Mammary epithelial cell (primary cell): ENCODE measurements at regions of chr12 and their contacts with region 1.

Region 1: GRCh38 chr12:50084775-50085614 is at the start of gene SMARCD1:
- DNase-seq: peak; percentile 86
- H3K4me3 ChIP-seq: peak within 1 kb of the TSS; percentile 47 to 77 (median 66)
- H3K27ac ChIP-seq: peak within 1 kb of the TSS; percentile 57
- H3K4me1 ChIP-seq: peaks cover 37% of the 10 kb centered on the region
- H3K27me3 ChIP-seq: no peaks in the 10 kb centered on the region
- CTCF ChIP-seq: peak; percentile 15 to 72
- total RNA-seq, gene SMARCD1: 106 to 107 TPM

Region 2: DNA sequence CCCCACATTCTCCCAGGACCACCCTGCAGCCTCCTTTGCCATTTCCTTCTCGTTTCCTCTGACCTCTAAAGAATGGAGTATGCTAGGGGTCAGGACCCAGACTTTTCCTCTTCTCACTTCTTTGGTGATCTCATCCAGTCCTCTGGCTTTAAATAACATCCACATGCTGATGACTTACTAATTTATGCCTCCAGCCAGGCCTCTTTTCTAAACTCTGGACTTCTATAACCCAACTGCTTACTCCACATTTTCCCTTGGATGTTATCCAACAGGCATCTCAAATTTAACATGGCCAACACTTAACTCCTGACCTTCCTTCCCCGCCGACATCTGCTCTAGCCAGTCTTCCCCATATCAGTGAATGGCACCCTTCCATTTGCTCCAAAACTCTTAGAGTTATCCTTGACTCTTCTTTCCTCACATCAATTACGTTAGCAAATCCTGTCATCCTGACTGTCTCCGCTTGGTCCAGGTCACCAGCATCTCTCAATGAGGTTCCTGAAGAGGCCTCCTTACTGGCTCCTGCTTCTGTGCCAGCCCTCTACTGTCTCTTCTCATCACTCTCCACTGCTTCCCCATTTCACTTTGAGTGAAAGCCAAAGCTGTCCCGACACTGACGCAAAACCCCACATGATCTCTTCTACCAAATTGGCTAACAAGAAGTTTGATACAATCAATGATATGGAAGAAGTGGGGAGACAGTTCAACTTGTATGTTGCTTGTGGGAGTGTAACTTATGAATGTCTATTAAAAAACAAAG is 300.9 kb before region 1 on chr12:
- CTCF ChIA-PET with region 1: no interaction called
- dilution Hi-C with region 1: no loop called
- in situ Hi-C with region 1: no loop called
- intact Hi-C with region 1: no loop called
- DNase-seq: no peak
- H3K4me3 ChIP-seq: no peak overlapping the region
- H3K27ac ChIP-seq: no peak overlapping the region
- H3K4me1 ChIP-seq: no peaks in the 10 kb centered on the region
- H3K27me3 ChIP-seq: no peaks in the 10 kb centered on the region
- CTCF ChIP-seq: no peak

Region 3: GRCh38 chr12:50111693-50112455 is 26.9 kb after region 1 on chr12 and contains the start of gene COX14:
- CTCF ChIA-PET with region 1: interaction called, 10 read pairs
- dilution Hi-C with region 1: no loop called
- in situ Hi-C with region 1: no loop called
- intact Hi-C with region 1: loop called (anchors 1 kb)
- DNase-seq: peak; percentile 100
- H3K4me3 ChIP-seq: peak within 1 kb of the TSS; percentile 64 to 100 (median 87)
- H3K27ac ChIP-seq: peak within 1 kb of the TSS; percentile 76
- H3K4me1 ChIP-seq: peaks cover 15% of the 10 kb centered on the region
- H3K27me3 ChIP-seq: no peaks in the 10 kb centered on the region
- CTCF ChIP-seq: peak; percentile 83 to 94
- total RNA-seq, gene COX14: 38.5 to 51.3 TPM

Region 4: DNA sequence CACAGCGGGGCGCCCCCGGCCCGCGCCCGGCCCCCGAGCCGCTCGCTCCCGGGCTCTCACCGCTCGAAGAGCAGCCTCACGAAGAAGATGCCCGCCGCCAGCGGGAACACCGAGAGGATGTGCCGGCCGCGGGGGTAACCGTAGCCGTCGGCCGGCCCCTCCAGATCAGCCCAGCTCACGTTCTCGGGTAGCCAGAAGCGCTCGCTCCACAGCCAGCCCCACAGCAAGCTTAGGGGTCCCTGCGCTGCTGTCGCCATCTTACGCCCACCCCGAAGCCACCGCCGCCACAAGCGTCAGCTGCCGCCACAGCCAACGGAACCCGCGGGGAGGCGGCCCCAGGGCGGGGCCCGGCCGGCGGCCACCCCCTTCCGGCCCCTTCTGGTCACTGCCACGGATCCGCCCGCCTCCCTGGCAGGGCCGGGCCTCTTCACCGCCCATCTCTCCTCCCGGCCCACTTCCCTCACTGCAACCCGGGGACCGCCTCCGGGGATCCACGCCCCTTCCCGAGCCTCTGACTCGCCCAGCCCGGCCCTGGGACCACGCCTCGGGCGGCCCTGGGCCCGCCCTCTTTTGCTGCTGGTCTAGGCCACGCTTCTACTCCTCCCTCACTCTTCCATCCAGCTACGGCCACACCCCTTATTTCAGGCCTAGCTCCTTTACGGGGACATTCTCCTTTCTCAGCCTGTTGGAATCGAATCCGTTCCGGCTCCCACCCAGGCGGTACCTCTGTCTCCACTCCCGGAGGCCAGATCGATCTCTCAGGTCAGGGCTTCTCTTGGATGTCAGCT is 82.2 kb after region 1 on chr12 and contains the start of gene CERS5:
- CTCF ChIA-PET with region 1: no interaction called
- dilution Hi-C with region 1: no loop called
- in situ Hi-C with region 1: loop called in 1 of 2 experiments (anchors 10 kb)
- intact Hi-C with region 1: loop called (anchors 2 kb)
- DNase-seq: peak; percentile 99
- H3K4me3 ChIP-seq: peak within 1 kb of the TSS; percentile 54 to 70 (median 62)
- H3K27ac ChIP-seq: peak within 1 kb of the TSS; percentile 76
- H3K4me1 ChIP-seq: peaks cover 7% of the 10 kb centered on the region
- H3K27me3 ChIP-seq: no peaks in the 10 kb centered on the region
- CTCF ChIP-seq: peak in 1 of 2 donors; percentile 13
- total RNA-seq, gene CERS5: 29.2 to 65.7 TPM

Region 5: GRCh38 chr12:50174971-50175715 is 90.1 kb after region 1 on chr12:
- CTCF ChIA-PET with region 1: no interaction called
- dilution Hi-C with region 1: no loop called
- in situ Hi-C with region 1: loop called in 1 of 2 experiments (anchors 10 kb)
- intact Hi-C with region 1: loop called (anchors 1 kb)
- DNase-seq: no peak
- H3K4me3 ChIP-seq: no peak overlapping the region
- H3K27ac ChIP-seq: no peak overlapping the region
- H3K4me1 ChIP-seq: no peaks in the 10 kb centered on the region
- H3K27me3 ChIP-seq: no peaks in the 10 kb centered on the region
- CTCF ChIP-seq: peak; percentile 52 to 56

Region 6: GRCh38 chr12:50271280-50272247 is 186.6 kb after region 1 on chr12:
- CTCF ChIA-PET with region 1: no interaction called
- dilution Hi-C with region 1: no loop called
- in situ Hi-C with region 1: no loop called
- intact Hi-C with region 1: no loop called
- DNase-seq: no peak
- H3K4me3 ChIP-seq: peak overlapping the region in 2 of 3 experiments; percentile 1 to 7
- H3K27ac ChIP-seq: no peak overlapping the region
- H3K4me1 ChIP-seq: peaks cover 4% of the 10 kb centered on the region
- H3K27me3 ChIP-seq: no peaks in the 10 kb centered on the region
- CTCF ChIP-seq: no peak

Region 7: DNA sequence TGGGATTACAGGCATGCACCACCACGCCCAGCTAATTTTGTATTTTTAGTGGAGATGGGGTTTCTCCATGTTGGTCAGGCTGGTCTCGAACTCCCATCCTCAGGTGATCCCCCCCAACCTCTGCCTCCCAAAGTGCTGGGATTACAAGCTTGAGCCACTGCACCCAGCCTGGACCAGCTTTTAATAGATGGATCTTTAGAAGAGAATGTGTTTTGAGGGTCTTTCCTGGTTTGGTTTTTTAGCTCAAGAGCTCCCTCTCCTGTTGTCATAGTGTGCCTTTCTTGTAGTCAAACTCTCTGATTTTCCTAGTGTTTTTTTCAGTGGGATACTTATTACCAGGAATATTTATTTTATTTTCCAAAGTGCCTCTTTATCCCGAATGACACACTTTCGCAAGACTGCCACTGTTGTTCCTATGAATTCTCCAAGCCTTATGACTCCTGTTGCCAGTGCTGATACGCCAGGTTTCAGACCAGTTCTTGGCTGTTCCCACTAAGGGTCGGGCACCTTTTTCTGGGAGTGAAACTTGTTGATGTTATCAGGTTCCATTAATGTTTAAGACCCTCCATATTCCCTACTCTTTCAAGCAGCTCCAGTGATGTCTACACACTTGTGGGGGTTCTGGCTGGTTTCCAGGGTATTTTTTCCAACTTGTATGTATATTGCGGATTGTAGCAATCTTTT is 229.8 kb after region 1 on chr12:
- CTCF ChIA-PET with region 1: no interaction called
- dilution Hi-C with region 1: no loop called
- in situ Hi-C with region 1: loop called in 1 of 2 experiments (anchors 25 kb)
- intact Hi-C with region 1: no loop called
- DNase-seq: no peak
- H3K4me3 ChIP-seq: no peak overlapping the region
- H3K27ac ChIP-seq: no peak overlapping the region
- H3K4me1 ChIP-seq: peaks cover 7% of the 10 kb centered on the region
- H3K27me3 ChIP-seq: no peaks in the 10 kb centered on the region
- CTCF ChIP-seq: peak; percentile 63 to 65

Region 8: GRCh38 chr12:50400598-50401364 is 315.8 kb after region 1 on chr12 and contains the start of gene LARP4:
- CTCF ChIA-PET with region 1: no interaction called
- dilution Hi-C with region 1: no loop called
- in situ Hi-C with region 1: no loop called
- intact Hi-C with region 1: loop called (anchors 5 kb)
- DNase-seq: peak; percentile 95
- H3K4me3 ChIP-seq: peak within 1 kb of the TSS; percentile 80 to 95 (median 81)
- H3K27ac ChIP-seq: peak within 1 kb of the TSS; percentile 81
- H3K4me1 ChIP-seq: peaks cover 7% of the 10 kb centered on the region
- H3K27me3 ChIP-seq: no peaks in the 10 kb centered on the region
- CTCF ChIP-seq: no peak
- total RNA-seq, gene LARP4: 45.0 to 65.0 TPM

Region 9: DNA sequence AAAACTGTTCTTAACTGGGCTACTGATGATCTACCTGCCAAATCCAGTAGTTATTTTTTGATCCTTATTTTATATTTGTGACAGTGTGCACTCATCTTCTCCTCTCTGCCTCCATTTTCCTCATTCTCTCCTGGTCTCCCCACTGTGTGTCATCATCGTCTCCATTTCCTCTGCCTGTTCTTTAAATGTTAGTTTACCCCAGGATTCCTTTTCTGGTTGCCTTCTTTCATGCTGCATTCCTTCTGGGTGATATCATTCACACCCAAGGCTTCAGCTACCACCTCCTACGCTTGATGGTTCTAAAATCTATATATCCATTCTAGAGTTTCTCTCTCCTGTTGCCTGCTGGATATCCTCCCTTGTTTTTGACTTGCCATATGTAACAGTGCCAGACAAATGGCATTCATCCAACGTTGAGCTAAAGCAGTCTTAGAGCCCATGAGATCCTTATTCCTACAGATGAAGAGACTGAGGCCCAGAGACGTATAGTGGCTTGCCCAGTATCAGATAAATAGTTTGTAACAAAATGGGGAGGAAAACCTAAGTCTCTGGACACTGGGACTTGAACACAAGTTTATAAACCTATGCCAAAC is 529.3 kb after region 1 on chr12:
- CTCF ChIA-PET with region 1: no interaction called
- dilution Hi-C with region 1: no loop called
- in situ Hi-C with region 1: no loop called
- intact Hi-C with region 1: loop called (anchors 10 kb)
- DNase-seq: peak; percentile 81
- H3K4me3 ChIP-seq: no peak overlapping the region
- H3K27ac ChIP-seq: peak overlapping the region; percentile 95
- H3K4me1 ChIP-seq: peaks cover 61% of the 10 kb centered on the region
- H3K27me3 ChIP-seq: no peaks in the 10 kb centered on the region
- CTCF ChIP-seq: no peak